CD14-positive monocyte (primary cell): ENCODE measurements at regions of chr19 and their contacts with region 1.

Region 1: GRCh38 chr19:33795370-33796163 is 1.1 kb upstream of the KCTD15 start:
- DNase-seq: peak; percentile 67 to 80 (median 72)
- H3K4me3 ChIP-seq: peak overlapping the region; percentile 55 to 85 (median 61)
- H3K4me3 Mint-ChIP-seq: peak overlapping the region; percentile 89 to 92
- H3K27ac ChIP-seq: peak overlapping the region; percentile 66 to 79
- H3K27ac Mint-ChIP-seq: peak overlapping the region in 6 of 7 donors; percentile 82 to 93 (median 90)
- H3K4me1 ChIP-seq: peaks cover 16 to 23% of the 10 kb centered on the region in 2 donors
- H3K4me1 Mint-ChIP-seq: peaks cover 17% of the 10 kb centered on the region
- H3K27me3 ChIP-seq: no peaks in the 10 kb centered on the region
- H3K27me3 Mint-ChIP-seq: peaks cover 5 to 13% (median 12%) of the 10 kb centered on the region in 3 donors
- CTCF ChIP-seq: peak; percentile 97

Region 2: GRCh38 chr19:33125929-33126388 is 669.6 kb before region 1 on chr19:
- intact Hi-C with region 1: no loop called
- DNase-seq: peak; percentile 37 to 51 (median 51)
- H3K4me3 ChIP-seq: no peak overlapping the region
- H3K4me3 Mint-ChIP-seq: no peak overlapping the region
- H3K27ac ChIP-seq: no peak overlapping the region
- H3K27ac Mint-ChIP-seq: peak overlapping the region in 1 of 7 donors; percentile 32
- H3K4me1 ChIP-seq: peaks cover 3 to 4% of the 10 kb centered on the region in 2 donors
- H3K4me1 Mint-ChIP-seq: peaks cover 3% of the 10 kb centered on the region
- H3K27me3 ChIP-seq: no peaks in the 10 kb centered on the region
- H3K27me3 Mint-ChIP-seq: no peaks in the 10 kb centered on the region
- CTCF ChIP-seq: peak; percentile 81

Region 3: GRCh38 chr19:33819880-33820781 is 24.6 kb after region 1 on chr19:
- intact Hi-C with region 1: loop called (anchors 1 to 2 kb)
- DNase-seq: peak; percentile 90 to 93 (median 90)
- H3K4me3 ChIP-seq: peak overlapping the region; percentile 13 to 84 (median 57)
- H3K4me3 Mint-ChIP-seq: peak overlapping the region; percentile 84 to 93
- H3K27ac ChIP-seq: peak overlapping the region; percentile 91 to 96
- H3K27ac Mint-ChIP-seq: peak overlapping the region; percentile 92 to 97 (median 96)
- H3K4me1 ChIP-seq: peaks cover 61 to 70% of the 10 kb centered on the region in 2 donors
- H3K4me1 Mint-ChIP-seq: peaks cover 56% of the 10 kb centered on the region
- H3K27me3 ChIP-seq: no peaks in the 10 kb centered on the region
- H3K27me3 Mint-ChIP-seq: peaks cover 0 to 2% (median 0%) of the 10 kb centered on the region in 3 donors
- CTCF ChIP-seq: no peak

Region 4: GRCh38 chr19:33998739-33999345 is 203.3 kb after region 1 on chr19:
- intact Hi-C with region 1: loop called (anchors 5 kb)
- DNase-seq: peak in 1 of 3 donors; percentile 19
- H3K4me3 ChIP-seq: no peak overlapping the region
- H3K4me3 Mint-ChIP-seq: no peak overlapping the region
- H3K27ac ChIP-seq: no peak overlapping the region
- H3K27ac Mint-ChIP-seq: no peak overlapping the region
- H3K4me1 ChIP-seq: no peaks in the 10 kb centered on the region
- H3K4me1 Mint-ChIP-seq: no peaks in the 10 kb centered on the region
- H3K27me3 ChIP-seq: no peaks in the 10 kb centered on the region
- H3K27me3 Mint-ChIP-seq: peaks cover 0 to 7% (median 6%) of the 10 kb centered on the region in 3 donors
- CTCF ChIP-seq: peak; percentile 53